ENCODE measurements at regions of chr11 and their contacts with region 1.

Region 1: GRCh38 chr11:125874556-125875124 is 12.8 kb upstream of the HYLS1 start:
- DNase-seq: peak; percentile 74 to 81
- H3K4me3 ChIP-seq: no peak overlapping the region
- H3K4me1 ChIP-seq: no peaks in the 10 kb centered on the region
- H3K27me3 ChIP-seq: peaks cover 20% of the 10 kb centered on the region

Region 2: GRCh38 chr11:125679397-125679796 is 195.2 kb before region 1 on chr11:
- in situ Hi-C with region 1: loop called (anchors 25 kb)
- DNase-seq: no peak
- H3K4me3 ChIP-seq: no peak overlapping the region
- H3K4me1 ChIP-seq: no peaks in the 10 kb centered on the region
- H3K27me3 ChIP-seq: no peaks in the 10 kb centered on the region

Measured in HAP-1 (cell line).